Activated CD4-positive, alpha-beta memory T cell treated with anti-CD3 and anti-CD28 coated beads, Interleukin-2, amount 10 ng/mL, durations not matched to agents 7 days and 5 days (primary cell): ENCODE measurements at regions of chr20 and their contacts with region 1.

Region 1: DNA sequence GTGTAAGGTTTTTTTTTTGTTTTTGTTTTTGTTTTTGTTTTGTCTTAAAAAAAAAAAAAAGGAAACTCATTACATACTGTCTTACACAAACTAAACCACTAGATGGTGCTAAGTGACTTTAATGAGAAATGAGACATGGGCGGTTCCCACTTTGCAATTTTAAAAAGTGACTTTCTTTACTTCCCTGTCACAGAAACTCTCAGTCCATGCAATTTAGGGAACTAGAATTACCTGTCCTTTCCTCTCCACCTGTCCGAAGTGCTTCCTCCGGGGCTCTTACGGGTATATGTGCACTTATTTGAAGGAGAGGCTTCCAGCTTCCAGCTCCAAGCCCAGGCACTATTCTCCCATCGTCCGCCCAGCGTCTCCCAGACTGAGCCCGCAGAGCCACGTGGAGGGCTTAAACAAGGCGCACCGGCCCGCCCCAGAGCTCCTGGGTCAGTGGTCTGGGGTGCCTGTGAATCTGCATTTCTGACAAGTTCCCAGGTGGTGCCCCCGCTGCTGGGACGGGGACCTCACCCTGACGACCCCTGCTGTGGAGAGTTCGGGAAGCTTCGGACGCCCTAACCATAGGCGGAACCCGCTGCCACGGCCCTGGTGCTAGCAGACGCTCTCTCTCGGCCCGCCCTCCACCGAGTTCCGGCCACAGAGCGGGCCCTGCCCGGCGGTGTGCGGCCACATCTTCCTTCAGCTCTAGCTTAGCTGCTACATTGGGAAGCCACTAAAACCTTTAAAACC is 26.1 kb downstream of the BFSP1 start:
- DNase-seq: no peak
- H3K4me3 Mint-ChIP-seq: peak overlapping the region; percentile 79
- H3K27ac Mint-ChIP-seq: peak overlapping the region; percentile 93
- H3K4me1 Mint-ChIP-seq: peaks cover 69% of the 10 kb centered on the region
- H3K27me3 Mint-ChIP-seq: peaks cover 7% of the 10 kb centered on the region

Region 2: GRCh38 chr20:17530716-17531664 is 25.9 kb after region 1 on chr20 and contains the start of gene BFSP1:
- CTCF ChIA-PET with region 1: interaction called, 77 read pairs
- POLR2A ChIA-PET with region 1: interaction called, 71 read pairs
- DNase-seq: peak; percentile 75
- H3K4me3 Mint-ChIP-seq: peak within 1 kb of the TSS; percentile 95
- H3K27ac Mint-ChIP-seq: peak within 1 kb of the TSS; percentile 94
- H3K4me1 Mint-ChIP-seq: peaks cover 33% of the 10 kb centered on the region
- H3K27me3 Mint-ChIP-seq: no peaks in the 10 kb centered on the region
- total RNA-seq, gene BFSP1: 2.7 to 3.2 TPM

Region 3: GRCh38 chr20:17569616-17570346 is 64.7 kb after region 1 on chr20 and contains the start of gene DSTN:
- CTCF ChIA-PET with region 1: interaction called, 16 read pairs
- POLR2A ChIA-PET with region 1: interaction called, 12 read pairs
- DNase-seq: peak; percentile 90
- H3K4me3 Mint-ChIP-seq: peak within 1 kb of the TSS; percentile 85
- H3K27ac Mint-ChIP-seq: peak within 1 kb of the TSS; percentile 83
- H3K4me1 Mint-ChIP-seq: peaks cover 33% of the 10 kb centered on the region
- H3K27me3 Mint-ChIP-seq: peaks cover 16% of the 10 kb centered on the region
- total RNA-seq, gene DSTN: 104 to 109 TPM

Region 4: DNA sequence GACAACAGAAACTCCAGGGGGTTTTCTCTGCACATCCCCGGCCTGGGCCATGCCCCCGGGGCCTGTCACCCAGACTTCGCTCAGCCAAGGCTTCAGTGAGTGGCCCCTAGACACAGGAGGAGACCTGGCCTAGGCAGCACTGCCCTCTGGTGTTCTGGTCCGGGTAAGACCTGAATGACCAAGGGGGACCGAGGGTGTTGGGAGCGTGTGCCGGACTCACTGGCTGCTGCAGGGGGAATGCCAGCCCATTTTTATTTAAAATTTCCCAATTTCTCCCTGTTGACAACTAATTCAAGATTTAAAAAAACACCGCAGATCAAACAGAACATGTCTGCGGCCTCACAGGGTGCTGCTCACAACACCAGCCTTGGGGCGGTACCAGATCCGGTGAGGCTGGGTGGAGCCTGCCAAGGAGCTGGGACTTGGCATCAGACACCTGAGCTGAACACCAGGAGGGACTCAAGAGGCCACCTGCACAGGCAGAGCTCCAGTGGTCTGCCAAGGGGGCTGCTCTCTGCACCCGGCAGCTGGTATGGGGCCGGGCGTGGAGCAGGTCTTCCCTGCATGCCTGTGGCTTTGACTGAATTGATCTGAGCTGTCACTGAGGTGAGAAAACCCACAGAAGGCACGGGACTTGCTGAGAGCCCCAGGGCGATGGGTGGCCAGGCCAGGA is 112.6 kb after region 1 on chr20:
- CTCF ChIA-PET with region 1: interaction called, 12 read pairs
- POLR2A ChIA-PET with region 1: interaction called, 5 read pairs
- DNase-seq: peak; percentile 55
- H3K4me3 Mint-ChIP-seq: no peak overlapping the region
- H3K27ac Mint-ChIP-seq: no peak overlapping the region
- H3K4me1 Mint-ChIP-seq: peaks cover 14% of the 10 kb centered on the region
- H3K27me3 Mint-ChIP-seq: no peaks in the 10 kb centered on the region

Region 5: GRCh38 chr20:17938871-17939619 is 434.0 kb after region 1 on chr20:
- CTCF ChIA-PET with region 1: interaction called, 12 read pairs
- POLR2A ChIA-PET with region 1: interaction called, 3 read pairs
- DNase-seq: peak; percentile 68
- H3K4me3 Mint-ChIP-seq: no peak overlapping the region
- H3K27ac Mint-ChIP-seq: no peak overlapping the region
- H3K4me1 Mint-ChIP-seq: peaks cover 24% of the 10 kb centered on the region
- H3K27me3 Mint-ChIP-seq: no peaks in the 10 kb centered on the region